HAP-1 (cell line): ENCODE measurements at regions of chr5 and their contacts with region 1.

Region 1: DNA sequence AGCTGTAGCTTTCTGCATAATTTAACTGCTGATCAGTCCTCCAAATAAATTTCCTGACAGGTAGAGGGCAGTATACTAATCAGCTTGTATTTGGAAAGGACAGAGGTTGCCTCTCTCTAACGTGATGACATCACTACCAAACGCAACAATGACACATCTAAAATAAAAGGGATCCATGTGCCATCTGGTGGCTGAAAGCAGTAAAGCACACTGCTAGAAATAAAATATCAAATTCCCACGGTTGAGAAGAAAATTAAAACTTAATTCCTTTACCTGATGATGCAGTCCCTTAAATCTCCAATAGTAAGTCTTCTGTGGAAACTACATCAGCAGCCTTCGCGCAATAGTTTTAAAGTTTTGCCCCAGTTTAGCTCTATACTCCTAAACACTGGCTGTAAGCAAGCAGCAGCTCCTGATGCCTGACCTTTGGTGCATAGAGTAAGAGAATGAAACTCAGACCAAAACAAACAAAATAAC is 54.5 kb downstream of the DIAPH1 start:
- DNase-seq: peak; percentile 75 to 88
- H3K4me3 ChIP-seq: no peak overlapping the region
- H3K4me1 ChIP-seq: peaks cover 24% of the 10 kb centered on the region
- H3K27me3 ChIP-seq: no peaks in the 10 kb centered on the region

Region 2: DNA sequence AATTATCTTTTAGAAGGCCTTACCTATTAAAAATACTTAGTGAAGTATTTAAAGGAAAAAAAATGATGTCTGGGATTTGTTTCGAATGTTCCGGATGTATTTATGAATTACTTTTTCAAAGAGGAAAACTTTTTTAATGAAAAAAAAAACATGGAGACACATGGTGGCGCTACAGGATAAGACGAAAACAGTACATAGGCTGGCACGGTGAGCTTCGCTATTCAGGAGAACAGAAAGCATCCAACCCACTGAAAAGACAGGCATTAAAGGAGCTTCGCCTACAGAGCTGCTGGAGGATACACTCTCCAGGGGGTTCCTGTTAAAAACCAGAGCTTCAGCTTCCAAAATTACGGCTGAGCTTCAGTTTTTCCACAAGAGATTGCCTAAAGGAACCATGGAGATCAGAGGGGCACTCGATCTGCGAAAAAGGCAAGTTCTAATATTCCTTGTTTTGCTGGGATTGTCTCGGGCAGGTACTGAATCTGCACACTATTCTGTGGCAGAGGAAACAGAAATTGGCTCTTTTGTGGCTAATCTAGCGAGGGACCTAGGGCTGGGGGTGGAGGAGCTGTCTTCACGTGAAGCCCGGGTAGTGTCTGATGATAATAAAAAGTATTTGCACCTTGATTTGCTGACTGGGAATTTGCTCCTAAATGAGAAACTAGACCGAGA is 341.0 kb before region 1 on chr5 and contains the start of gene PCDHB14:
- in situ Hi-C with region 1: loop called (anchors 25 kb)
- DNase-seq: peak; percentile 26 to 30
- H3K4me3 ChIP-seq: no peak within 1 kb of the TSS
- H3K4me1 ChIP-seq: no peaks in the 10 kb centered on the region
- H3K27me3 ChIP-seq: no peaks in the 10 kb centered on the region; the same call in 1 of the 2 replicates

Region 3: DNA sequence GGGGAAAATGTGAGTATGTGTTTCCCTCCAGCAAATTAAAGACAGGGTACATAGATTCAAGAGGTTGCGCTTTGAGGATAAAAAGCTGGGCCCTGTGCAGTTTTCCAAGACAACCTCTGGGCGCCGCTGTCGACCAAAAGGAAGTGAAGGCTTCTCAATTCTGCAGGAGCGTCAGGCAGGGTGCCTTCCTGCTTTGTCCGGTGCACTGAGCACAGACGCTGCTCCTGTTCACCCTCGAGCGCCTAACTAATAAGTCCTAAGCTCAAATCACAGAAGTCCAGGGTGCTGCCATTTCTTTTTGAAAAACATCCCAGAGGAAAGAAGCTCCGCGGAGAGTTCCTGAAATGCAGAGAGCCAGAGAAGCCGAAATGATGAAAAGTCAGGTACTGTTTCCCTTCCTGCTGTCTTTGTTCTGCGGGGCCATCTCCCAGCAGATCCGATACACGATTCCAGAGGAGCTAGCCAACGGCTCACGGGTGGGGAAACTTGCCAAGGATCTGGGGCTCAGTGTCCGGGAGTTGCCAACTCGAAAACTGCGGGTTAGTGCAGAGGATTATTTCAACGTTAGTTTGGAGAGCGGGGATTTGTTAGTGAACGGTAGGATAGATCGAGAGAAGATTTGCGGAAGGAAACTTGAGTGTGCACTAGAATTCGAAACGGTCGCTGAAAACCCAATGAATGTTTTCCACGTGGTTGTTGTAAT is 214.2 kb before region 1 on chr5 and contains the start of gene PCDHGB1:
- in situ Hi-C with region 1: loop called (anchors 10 kb)
- DNase-seq: peak; percentile 40 to 74
- H3K4me3 ChIP-seq: no peak within 1 kb of the TSS
- H3K4me1 ChIP-seq: no peaks in the 10 kb centered on the region
- H3K27me3 ChIP-seq: no peaks in the 10 kb centered on the region

Region 4: GRCh38 chr5:141402553-141403260 is 161.5 kb before region 1 on chr5 and contains the start of gene PCDHGA9:
- in situ Hi-C with region 1: no loop called
- DNase-seq: peak in 1 of 2 experiments; percentile 27
- H3K4me3 ChIP-seq: no peak within 1 kb of the TSS
- H3K4me1 ChIP-seq: no peaks in the 10 kb centered on the region
- H3K27me3 ChIP-seq: no peaks in the 10 kb centered on the region

Region 5: DNA sequence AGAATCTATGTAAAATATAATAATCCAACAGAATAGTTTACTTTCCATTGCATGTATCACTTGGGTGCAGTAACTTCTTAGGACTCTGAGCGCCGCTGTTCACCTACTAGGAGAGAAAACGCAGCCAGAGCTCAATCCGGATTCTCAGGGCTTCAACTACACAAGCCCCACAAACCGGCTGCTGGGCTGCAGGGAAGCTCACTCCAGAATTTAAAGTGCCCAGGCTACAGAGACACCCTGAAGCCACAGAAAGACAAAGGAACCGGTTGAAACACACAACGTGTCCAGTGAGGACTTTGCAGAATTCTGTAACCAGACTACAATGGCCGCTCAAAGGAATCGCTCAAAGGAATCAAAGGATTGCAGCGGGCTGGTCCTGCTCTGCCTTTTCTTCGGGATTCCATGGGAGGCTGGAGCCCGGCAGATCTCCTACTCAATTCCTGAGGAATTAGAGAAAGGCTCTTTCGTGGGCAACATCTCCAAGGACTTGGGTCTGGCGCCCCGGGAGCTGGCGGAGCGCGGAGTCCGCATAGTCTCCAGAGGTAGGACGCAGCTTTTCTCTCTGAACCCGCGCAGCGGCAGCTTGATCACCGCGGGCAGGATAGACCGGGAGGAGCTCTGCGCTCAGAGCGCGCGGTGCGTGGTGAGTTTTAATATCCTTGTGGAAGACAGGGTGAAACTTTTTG is 151.3 kb before region 1 on chr5 and contains the start of gene PCDHGA10:
- in situ Hi-C with region 1: loop called (anchors 5 kb)
- DNase-seq: peak; percentile 66 to 85
- H3K4me3 ChIP-seq: peak within 1 kb of the TSS; percentile 57
- H3K4me1 ChIP-seq: no peaks in the 10 kb centered on the region; the same call in 1 of the 2 replicates
- H3K27me3 ChIP-seq: no peaks in the 10 kb centered on the region

Region 6: DNA sequence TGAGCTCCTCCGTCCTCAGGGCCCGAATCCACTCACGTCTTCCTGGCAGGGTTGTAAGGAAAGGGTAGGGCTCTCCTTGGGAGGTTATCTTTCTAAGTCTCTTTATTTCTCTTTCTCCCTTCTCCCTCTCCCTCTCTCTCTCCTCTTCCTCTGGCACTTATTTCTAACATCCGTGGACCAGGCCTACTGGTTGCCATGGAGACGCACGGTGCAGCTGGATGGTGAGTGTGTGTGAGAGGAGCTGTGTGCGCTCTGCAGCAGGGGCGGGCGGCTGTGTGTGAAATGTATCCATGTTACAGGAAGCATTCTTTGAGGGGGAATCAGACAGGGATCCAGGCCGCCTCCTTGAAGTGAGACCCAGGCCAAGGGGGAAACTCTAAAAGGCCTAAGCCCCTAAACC is 281.8 kb after region 1 on chr5:
- in situ Hi-C with region 1: no loop called
- DNase-seq: peak in 1 of 2 experiments; percentile 50
- H3K4me3 ChIP-seq: no peak overlapping the region
- H3K4me1 ChIP-seq: peaks cover 12% of the 10 kb centered on the region
- H3K27me3 ChIP-seq: no peaks in the 10 kb centered on the region